ENCODE measurements at regions of chr7 and their contacts with region 1.

Region 1: DNA sequence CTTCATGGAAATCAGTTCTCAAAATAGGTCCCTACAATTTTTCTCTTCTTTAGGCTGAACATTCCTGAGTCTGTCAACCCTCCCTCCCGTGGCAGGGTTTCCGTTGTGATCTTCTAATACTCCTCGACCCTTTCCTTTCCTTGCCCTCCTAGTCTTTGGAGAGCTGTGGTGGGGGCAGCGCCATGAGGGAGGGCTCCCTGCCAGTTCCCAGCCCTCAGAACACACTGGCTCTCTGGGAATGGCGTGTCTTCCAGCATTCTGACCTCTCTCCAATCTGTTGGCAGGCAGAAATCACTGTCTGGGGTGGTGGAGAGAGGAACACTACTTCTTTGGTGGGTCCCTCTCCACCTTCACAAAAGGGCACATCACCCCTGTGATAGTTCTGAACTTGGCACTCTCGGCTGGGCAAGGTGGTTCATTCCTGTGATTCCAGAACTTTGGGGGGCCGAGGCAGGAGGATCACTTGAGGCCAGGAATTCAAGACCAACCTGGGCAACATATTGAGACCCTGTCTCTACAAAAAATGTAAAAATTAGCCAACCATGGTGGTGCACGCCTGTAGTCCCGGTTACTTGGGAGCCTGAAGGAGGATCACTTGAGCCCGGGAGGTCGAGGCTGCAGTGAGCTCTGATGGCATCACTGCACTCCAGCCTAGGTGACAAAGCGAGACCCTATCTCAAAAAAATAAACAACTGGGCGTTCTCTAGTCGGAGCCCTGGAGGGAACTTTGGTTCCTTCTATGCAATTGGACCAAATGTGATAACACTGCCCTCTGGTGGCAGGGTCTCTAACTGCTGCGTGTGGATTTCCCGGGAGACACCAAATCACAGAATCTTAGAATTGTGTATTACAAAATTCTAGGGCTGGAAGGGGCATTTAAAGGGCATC is 13.1 kb upstream of the ARPC1A start:
- DNase-seq: peak; percentile 46
- H3K4me3 ChIP-seq: no peak overlapping the region
- H3K27ac ChIP-seq: no peak overlapping the region
- H3K4me1 ChIP-seq: peaks cover 8% of the 10 kb centered on the region
- H3K27me3 ChIP-seq: no peaks in the 10 kb centered on the region
- CTCF ChIP-seq: peak; percentile 88 to 94

Region 2: DNA sequence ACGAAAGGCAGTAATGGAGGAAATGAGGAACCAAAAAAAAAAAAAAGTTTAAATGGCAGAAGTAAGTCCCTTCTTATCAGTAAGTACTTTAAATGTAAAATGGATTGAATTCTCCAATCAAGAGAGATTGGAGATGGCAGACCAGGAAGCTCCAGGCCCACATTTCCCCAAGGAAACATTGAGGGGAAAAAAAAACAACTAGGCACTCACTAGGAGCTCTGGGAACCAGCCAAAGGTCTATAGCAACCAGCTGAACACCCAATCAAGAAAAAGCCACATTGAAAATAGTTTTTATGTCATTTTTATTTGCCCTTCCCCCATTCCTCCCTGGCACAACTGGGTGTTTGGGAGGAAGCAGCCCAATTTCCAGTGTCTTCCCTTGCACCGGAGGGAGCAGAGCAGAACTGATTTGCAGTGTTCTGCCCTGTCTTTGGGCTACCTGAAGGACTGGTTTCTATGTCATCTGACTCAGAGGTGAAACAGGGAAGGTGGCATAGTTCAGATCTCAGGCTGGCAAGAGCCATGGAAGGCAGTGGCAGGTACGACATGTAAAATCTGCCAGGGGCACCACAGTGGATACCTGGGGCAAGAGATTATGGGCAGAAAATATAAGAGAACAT is 290.5 kb before region 1 on chr7:
- CTCF ChIA-PET with region 1: no interaction called
- dilution Hi-C with region 1: loop called (anchors 25 kb)
- in situ Hi-C with region 1: no loop called
- intact Hi-C with region 1: no loop called
- DNase-seq: no peak
- H3K4me3 ChIP-seq: no peak overlapping the region
- H3K27ac ChIP-seq: no peak overlapping the region
- H3K4me1 ChIP-seq: no peaks in the 10 kb centered on the region
- H3K27me3 ChIP-seq: no peaks in the 10 kb centered on the region
- CTCF ChIP-seq: no peak

Region 3: GRCh38 chr7:99040104-99040958 is 272.2 kb before region 1 on chr7:
- CTCF ChIA-PET with region 1: no interaction called
- dilution Hi-C with region 1: no loop called
- in situ Hi-C with region 1: loop called in 1 of 2 experiments (anchors 5 kb)
- intact Hi-C with region 1: loop called (anchors 1 kb)
- DNase-seq: peak; percentile 65
- H3K4me3 ChIP-seq: no peak overlapping the region
- H3K27ac ChIP-seq: no peak overlapping the region
- H3K4me1 ChIP-seq: no peaks in the 10 kb centered on the region
- H3K27me3 ChIP-seq: no peaks in the 10 kb centered on the region
- CTCF ChIP-seq: peak; percentile 51 to 65

Region 4: DNA sequence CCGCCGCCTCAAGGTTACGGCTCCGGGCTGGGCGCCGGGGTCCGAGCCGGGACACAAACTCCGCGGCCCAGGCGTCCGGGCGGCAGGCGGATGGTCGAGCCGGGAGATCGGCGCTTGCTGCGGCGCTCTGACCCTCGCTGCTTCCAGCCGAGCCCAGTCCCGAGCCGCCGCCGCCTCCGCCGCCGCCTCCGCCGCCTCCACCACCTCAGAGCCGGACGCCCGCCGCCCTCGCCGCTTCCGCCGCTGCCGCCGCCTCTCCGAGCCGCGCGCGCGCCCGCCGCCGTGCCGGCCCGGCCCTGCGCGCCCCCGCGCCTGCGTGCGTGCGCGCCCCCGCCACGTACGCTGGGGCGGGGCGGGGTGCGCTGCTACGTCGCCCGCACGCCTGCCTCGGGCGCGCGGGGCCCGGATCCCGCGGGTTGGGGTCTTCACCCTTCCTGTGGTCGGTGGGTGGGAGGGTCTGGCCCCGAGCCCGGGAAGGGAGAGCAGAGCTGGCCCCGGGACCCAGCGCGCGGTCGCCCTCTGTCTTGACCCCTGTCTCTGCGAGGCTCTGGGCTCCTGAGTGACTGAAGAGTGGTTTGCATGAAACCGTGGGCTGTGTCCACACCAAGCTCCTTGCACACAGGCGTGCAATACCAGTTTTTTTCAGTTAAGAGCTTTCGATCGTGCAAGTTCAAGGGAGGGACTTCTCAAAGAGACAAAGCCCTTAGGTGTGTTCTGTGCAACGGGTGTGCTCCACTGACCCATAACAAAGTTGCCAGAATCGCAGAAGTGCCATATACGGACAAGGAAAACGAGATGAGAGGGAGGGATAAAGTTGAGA is 168.5 kb before region 1 on chr7 and contains the start of gene SMURF1:
- CTCF ChIA-PET with region 1: no interaction called
- dilution Hi-C with region 1: no loop called
- in situ Hi-C with region 1: loop called in 1 of 2 experiments (anchors 25 kb)
- intact Hi-C with region 1: loop called (anchors 1 kb)
- DNase-seq: peak; percentile 52
- H3K4me3 ChIP-seq: peak within 1 kb of the TSS; percentile 65 to 89 (median 77)
- H3K27ac ChIP-seq: peak within 1 kb of the TSS; percentile 83
- H3K4me1 ChIP-seq: peaks cover 7% of the 10 kb centered on the region
- H3K27me3 ChIP-seq: no peaks in the 10 kb centered on the region
- CTCF ChIP-seq: no peak
- total RNA-seq, gene SMURF1: 42.5 to 43.2 TPM

Region 5: GRCh38 chr7:99210264-99210970 is 102.1 kb before region 1 on chr7:
- CTCF ChIA-PET with region 1: no interaction called
- dilution Hi-C with region 1: no loop called
- in situ Hi-C with region 1: no loop called
- intact Hi-C with region 1: loop called (anchors 2 kb)
- DNase-seq: peak; percentile 93
- H3K4me3 ChIP-seq: no peak overlapping the region
- H3K27ac ChIP-seq: peak overlapping the region; percentile 90
- H3K4me1 ChIP-seq: peaks cover 26% of the 10 kb centered on the region
- H3K27me3 ChIP-seq: no peaks in the 10 kb centered on the region
- CTCF ChIP-seq: no peak

Region 6: DNA sequence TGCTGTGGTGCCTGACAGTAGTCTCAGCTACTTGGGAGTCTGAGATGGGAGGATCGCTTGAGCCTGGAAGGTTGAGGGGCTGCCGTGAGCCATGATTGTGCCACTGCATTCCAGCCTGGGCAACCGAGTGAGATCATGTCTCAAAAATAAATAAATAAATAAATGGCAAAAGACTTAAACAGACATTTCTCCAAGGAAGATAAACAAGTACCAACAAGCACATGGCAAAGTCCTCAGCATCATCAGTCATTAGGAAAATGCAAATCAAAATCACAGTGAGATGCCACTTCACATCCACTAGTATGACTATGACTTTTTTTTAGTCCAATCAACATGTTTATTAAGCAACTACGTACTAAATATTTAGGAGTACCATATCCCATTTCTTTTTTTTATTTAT is 83.3 kb before region 1 on chr7:
- CTCF ChIA-PET with region 1: no interaction called
- dilution Hi-C with region 1: loop called (anchors 5 kb)
- in situ Hi-C with region 1: no loop called
- intact Hi-C with region 1: no loop called
- DNase-seq: peak; percentile 51
- H3K4me3 ChIP-seq: no peak overlapping the region
- H3K27ac ChIP-seq: no peak overlapping the region
- H3K4me1 ChIP-seq: peaks cover 14% of the 10 kb centered on the region
- H3K27me3 ChIP-seq: no peaks in the 10 kb centered on the region
- CTCF ChIP-seq: no peak

Region 7: GRCh38 chr7:99267481-99267840 is 45.1 kb before region 1 on chr7:
- CTCF ChIA-PET with region 1: no interaction called
- dilution Hi-C with region 1: loop called (anchors 5 kb)
- in situ Hi-C with region 1: no loop called
- intact Hi-C with region 1: no loop called
- DNase-seq: peak; percentile 99
- H3K4me3 ChIP-seq: no peak overlapping the region
- H3K27ac ChIP-seq: peak overlapping the region; percentile 88
- H3K4me1 ChIP-seq: peaks cover 28% of the 10 kb centered on the region
- H3K27me3 ChIP-seq: no peaks in the 10 kb centered on the region
- CTCF ChIP-seq: no peak

Region 8: DNA sequence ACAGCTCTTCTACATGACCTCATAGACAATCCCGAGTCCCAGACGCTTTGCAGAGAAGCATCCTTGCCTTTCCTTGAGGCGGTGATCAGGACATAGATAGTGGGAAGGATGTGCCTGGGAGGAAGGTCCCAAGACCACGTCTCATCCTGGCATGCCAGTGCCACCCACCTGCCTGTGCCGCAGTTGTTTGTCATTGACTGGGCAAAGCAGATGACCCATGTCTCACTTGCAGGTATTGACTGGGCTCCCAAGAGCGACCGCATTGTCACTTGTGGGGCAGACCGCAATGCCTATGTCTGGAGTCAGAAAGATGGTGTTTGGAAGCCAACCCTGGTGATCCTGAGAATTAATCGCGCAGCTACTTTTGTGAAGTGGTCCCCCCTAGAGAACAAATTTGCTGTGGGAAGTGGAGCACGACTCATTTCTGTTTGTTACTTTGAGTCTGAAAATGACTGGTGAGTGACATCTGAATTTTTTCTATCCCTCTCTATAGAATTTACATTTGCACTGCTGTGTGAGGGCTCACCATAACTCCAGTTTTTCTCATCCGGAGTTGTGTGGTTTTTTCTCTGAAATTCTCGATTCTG is 31.6 kb after region 1 on chr7:
- CTCF ChIA-PET with region 1: no interaction called
- dilution Hi-C with region 1: no loop called
- in situ Hi-C with region 1: no loop called
- intact Hi-C with region 1: no loop called
- DNase-seq: no peak
- H3K4me3 ChIP-seq: no peak overlapping the region
- H3K27ac ChIP-seq: no peak overlapping the region
- H3K4me1 ChIP-seq: no peaks in the 10 kb centered on the region
- H3K27me3 ChIP-seq: no peaks in the 10 kb centered on the region
- CTCF ChIP-seq: no peak

Region 9: GRCh38 chr7:99392677-99393354 is 80.3 kb after region 1 on chr7:
- CTCF ChIA-PET with region 1: no interaction called
- dilution Hi-C with region 1: no loop called
- in situ Hi-C with region 1: no loop called
- intact Hi-C with region 1: no loop called
- DNase-seq: no peak
- H3K4me3 ChIP-seq: peak overlapping the region in 2 of 3 experiments; percentile 24 to 54
- H3K27ac ChIP-seq: no peak overlapping the region
- H3K4me1 ChIP-seq: peaks cover 14% of the 10 kb centered on the region
- H3K27me3 ChIP-seq: no peaks in the 10 kb centered on the region
- CTCF ChIP-seq: no peak

Measured in mammary epithelial cell (primary cell).